ENCODE measurements at regions of chr17 and their contacts with region 1.

Region 1: DNA sequence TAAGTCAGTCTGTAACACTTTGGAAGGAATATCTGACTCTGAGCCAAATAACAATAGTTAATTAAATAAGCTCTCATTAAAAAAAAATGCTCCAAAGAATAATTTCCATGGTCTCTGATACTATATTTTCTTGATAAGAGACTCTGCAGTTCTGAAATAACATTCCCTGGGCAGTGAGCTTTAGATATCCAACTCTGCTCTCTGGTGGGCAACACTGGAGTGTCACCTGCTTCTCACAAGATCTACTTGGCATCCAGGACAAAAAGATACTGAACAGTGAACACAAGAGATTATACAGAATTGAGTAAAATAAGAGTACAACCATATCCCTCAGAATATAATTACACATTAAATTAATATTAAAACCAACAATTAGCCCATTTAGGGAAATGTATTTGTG is 13.7 kb downstream of the BLMH start:
- DNase-seq: no peak
- H3K4me3 Mint-ChIP-seq: no peak overlapping the region
- H3K27ac Mint-ChIP-seq: no peak overlapping the region
- H3K4me1 Mint-ChIP-seq: peaks cover 3% of the 10 kb centered on the region
- H3K27me3 Mint-ChIP-seq: no peaks in the 10 kb centered on the region

Region 2: DNA sequence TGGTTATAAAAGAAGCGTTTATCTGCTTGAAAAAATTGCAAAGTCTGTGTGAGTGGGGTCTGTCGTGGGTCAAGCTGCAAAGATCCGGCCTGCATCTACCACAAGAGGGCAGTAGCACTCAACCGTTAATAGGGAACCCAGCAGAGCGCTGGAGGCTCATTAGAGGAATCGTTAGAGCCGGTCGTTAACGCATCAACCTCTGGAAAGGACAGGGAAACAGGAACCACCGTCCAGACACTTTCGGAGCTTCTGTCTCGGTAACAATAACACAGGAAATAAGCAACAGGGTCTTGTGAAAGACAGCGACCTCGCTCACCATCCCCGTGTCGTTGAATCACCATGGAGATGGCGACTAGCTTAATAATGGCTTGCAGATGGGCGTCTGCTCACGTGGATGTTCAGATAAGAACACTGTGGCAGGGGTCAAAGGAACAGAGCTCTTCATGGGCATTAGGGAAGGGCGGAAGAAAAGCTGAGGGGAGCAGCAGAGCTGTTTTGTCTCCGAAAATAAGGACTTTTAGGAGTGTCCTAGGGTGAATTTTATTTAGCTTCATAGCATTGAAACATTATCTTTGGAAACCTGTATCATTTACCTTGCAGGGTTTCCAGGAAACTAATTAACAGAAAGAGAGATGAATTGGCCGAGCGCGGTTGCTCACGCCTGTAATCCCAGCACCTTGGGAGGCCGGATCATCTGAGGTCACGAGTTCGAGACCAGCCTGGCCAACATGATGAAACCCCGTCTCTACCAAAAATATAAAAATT is 173.3 kb before region 1 on chr17:
- intact Hi-C with region 1: loop called (anchors 5 kb)
- DNase-seq: peak; percentile 52
- H3K4me3 Mint-ChIP-seq: peak overlapping the region; percentile 71
- H3K27ac Mint-ChIP-seq: peak overlapping the region; percentile 16
- H3K4me1 Mint-ChIP-seq: peaks cover 4% of the 10 kb centered on the region
- H3K27me3 Mint-ChIP-seq: peaks cover 15% of the 10 kb centered on the region

Measured in activated T-helper 2 cell treated with anti-CD3 and anti-CD28 coated beads, Interferon-gamma antibody, Interleukin-2, Interleukin-4, amounts not matched to agents 10 μg/mL and 5 μg/mL and 100 μg/mL, durations not matched to agents 14 hours and 24 hours and 36 hours (primary cell).